Posterior vena cava (tissue), 2 donors: ENCODE measurements at regions of chr11 and their contacts with region 1.

Region 1: GRCh38 chr11:19013181-19013857 is 47.2 kb downstream of the MRGPRX2 start:
- DNase-seq: no peak

Region 2: GRCh38 chr11:18650859-18651557 is 362.3 kb before region 1 on chr11:
- intact Hi-C with region 1: no loop called
- DNase-seq: no peak

Region 3: DNA sequence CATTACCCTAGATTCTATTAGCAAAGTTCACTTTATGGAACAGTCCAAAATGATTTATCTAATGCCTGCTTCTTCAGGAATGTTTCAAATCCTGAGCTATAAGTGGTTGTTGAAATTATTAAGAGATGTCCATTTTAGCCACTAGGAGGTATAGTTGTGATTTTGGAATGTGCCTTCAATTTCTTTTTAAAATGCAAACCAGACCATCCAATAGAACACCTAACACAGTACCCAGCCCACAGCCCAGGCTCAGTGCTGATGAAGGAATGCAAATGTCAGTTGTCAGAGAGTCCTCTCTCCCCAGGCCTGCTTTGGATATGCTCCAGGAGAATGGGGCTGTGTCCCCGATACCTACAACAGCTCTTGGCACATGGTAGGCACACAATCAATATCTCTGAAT is 313.2 kb after region 1 on chr11:
- intact Hi-C with region 1: no loop called
- DNase-seq: no peak

Region 4: GRCh38 chr11:20980736-20981135 is 1967.4 kb after region 1 on chr11:
- intact Hi-C with region 1: loop called in 1 of 2 experiments (anchors 5 kb)
- DNase-seq: no peak